ENCODE measurements at regions of chr6 and their contacts with region 1.

Region 1: GRCh38 chr6:149028767-149029405 is 282.1 kb downstream of the UST start:
- DNase-seq: peak; percentile 88
- ATAC-seq: no peak
- H3K4me3 ChIP-seq: no peak overlapping the region
- H3K27ac ChIP-seq: no peak overlapping the region
- H3K4me1 ChIP-seq: peaks cover 38% of the 10 kb centered on the region
- H3K27me3 ChIP-seq: no peaks in the 10 kb centered on the region
- CTCF ChIP-seq: peak; percentile 67

Region 2: GRCh38 chr6:148578245-148578732 is 450.6 kb before region 1 on chr6:
- CTCF ChIA-PET with region 1: interaction called, 5 read pairs
- POLR2A ChIA-PET with region 1: no interaction called
- intact Hi-C with region 1: loop called (anchors 1 kb)
- DNase-seq: peak; percentile 80
- ATAC-seq: peak; percentile 100
- H3K4me3 ChIP-seq: peak overlapping the region; percentile 43; the same call in 1 of the 2 replicates
- H3K27ac ChIP-seq: no peak overlapping the region
- H3K4me1 ChIP-seq: peaks cover 12% of the 10 kb centered on the region; the same call in 1 of the 2 replicates
- H3K27me3 ChIP-seq: no peaks in the 10 kb centered on the region
- CTCF ChIP-seq: peak; percentile 95

Region 3: DNA sequence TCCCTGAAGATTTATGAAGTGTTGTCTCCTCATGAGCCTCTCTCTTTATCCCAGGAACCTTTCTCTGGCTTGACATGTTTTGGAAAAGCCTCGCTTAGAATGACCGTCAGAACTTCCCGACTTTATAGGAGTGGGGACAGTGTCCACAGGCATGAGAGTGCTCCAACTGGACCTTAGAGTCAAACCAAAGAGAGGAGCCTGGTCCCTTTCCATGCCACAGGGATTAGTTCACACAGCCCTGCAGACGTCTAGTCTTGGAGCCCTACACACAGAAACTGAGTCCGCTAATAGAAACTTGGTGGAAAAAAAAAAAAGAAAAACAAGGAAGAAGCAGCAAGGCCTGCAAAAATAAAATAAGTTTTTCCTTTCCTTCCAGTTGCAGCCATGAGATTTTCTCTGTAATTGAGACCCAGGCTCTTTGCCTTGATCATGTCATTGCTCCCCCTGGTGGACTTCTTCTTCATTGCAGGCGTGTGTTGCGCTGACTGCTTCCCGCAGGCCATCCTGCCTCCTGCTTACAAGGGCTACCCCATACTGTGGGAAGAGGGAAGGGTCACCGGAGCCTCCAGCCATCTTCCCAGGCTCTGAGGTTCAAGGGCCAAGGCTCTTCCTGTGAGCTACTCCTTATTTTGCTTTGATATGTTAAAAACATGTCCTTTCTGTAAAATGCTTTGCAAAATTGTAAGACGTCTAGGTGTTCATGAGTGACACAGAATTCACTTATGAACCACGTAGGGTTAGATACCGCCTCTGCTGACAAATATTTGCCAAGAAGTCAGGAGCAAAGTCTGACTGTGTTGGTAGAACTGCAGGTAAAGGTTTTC is 81.1 kb before region 1 on chr6:
- CTCF ChIA-PET with region 1: no interaction called
- POLR2A ChIA-PET with region 1: no interaction called
- intact Hi-C with region 1: loop called (anchors 1 kb)
- DNase-seq: peak; percentile 86
- ATAC-seq: peak; percentile 88
- H3K4me3 ChIP-seq: no peak overlapping the region
- H3K27ac ChIP-seq: no peak overlapping the region
- H3K4me1 ChIP-seq: peaks cover 16% of the 10 kb centered on the region
- H3K27me3 ChIP-seq: no peaks in the 10 kb centered on the region
- CTCF ChIP-seq: peak; percentile 74

Region 4: DNA sequence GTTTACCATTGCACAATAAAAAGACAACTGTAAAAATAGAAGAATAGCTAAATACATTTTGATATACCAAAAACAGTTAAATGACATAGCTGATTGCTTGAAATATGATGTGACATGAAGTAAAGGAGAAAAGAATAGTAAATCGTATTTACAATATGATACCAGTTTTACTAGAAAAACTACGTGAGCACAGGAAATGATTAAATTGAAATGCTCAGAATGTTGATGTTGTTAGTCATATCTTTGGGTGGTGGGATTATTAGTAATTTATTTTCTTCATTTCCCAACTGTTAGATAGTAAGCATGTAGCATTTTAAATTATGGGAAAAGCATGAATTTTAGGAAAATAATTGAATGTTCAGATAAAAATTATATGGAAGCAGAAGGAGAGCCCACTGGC is 20.3 kb after region 1 on chr6:
- CTCF ChIA-PET with region 1: no interaction called
- POLR2A ChIA-PET with region 1: interaction called, 3 read pairs
- intact Hi-C with region 1: loop called (anchors 2 kb)
- DNase-seq: peak; percentile 78
- ATAC-seq: peak; percentile 77
- H3K4me3 ChIP-seq: peak overlapping the region; percentile 35; the same call in 1 of the 2 replicates
- H3K27ac ChIP-seq: peak overlapping the region; percentile 33
- H3K4me1 ChIP-seq: peaks cover 38% of the 10 kb centered on the region
- H3K27me3 ChIP-seq: no peaks in the 10 kb centered on the region
- CTCF ChIP-seq: no peak

Region 5: GRCh38 chr6:149233056-149233715 is 204.3 kb after region 1 on chr6:
- CTCF ChIA-PET with region 1: no interaction called
- POLR2A ChIA-PET with region 1: no interaction called
- intact Hi-C with region 1: loop called (anchors 2 kb)
- DNase-seq: peak; percentile 94
- ATAC-seq: peak; percentile 89
- H3K4me3 ChIP-seq: peak overlapping the region; percentile 55
- H3K27ac ChIP-seq: peak overlapping the region; percentile 100
- H3K4me1 ChIP-seq: peaks cover 47% of the 10 kb centered on the region
- H3K27me3 ChIP-seq: no peaks in the 10 kb centered on the region
- CTCF ChIP-seq: no peak

Region 6: DNA sequence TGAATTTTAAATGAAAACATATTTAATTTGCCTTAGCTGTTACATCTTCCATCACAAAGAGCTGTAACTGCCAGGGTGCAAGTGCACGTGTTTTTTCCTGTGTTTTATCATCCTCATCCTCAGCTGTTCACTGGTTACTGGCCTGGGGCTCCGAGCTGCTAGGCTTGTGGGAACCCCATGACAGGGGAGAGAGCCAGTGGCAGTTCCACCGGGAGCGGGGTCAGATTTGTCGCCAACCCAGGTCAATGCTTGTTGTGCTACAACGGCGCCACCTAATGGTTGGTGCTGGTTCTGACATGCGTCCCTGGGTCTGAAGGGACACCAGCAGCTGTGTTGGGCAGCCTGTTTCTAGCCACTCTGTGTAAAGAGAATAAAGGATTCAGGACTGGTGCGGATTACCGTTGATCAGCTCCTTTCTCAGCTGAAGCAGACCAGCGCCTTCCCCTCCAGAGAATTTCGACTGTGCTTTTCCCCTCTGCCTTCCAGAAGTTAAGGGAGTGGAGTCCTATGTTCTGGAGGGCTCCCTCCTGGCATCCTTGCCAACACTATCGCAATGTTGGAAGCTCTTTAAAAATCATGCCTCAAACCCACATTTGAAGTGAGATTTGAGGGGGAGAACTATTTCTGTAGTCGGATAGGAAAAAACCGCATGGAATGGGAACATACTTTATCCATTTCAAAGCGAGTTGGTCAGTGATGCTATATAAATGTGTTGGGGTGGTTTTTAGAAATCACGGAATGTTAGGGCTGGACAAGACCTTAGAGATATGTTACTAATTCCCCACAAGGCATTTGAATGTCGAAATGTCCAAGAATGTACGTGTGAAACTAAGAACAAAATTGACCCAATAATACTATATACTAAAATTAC is 403.3 kb after region 1 on chr6:
- CTCF ChIA-PET with region 1: interaction called, 7 read pairs
- POLR2A ChIA-PET with region 1: no interaction called
- intact Hi-C with region 1: loop called (anchors 1 kb)
- DNase-seq: peak; percentile 87
- ATAC-seq: peak; percentile 94
- H3K4me3 ChIP-seq: no peak overlapping the region
- H3K27ac ChIP-seq: no peak overlapping the region
- H3K4me1 ChIP-seq: no peaks in the 10 kb centered on the region
- H3K27me3 ChIP-seq: no peaks in the 10 kb centered on the region
- CTCF ChIP-seq: peak; percentile 89

Region 7: GRCh38 chr6:149513915-149514314 is 485.0 kb after region 1 on chr6:
- CTCF ChIA-PET with region 1: interaction called, 3 read pairs
- POLR2A ChIA-PET with region 1: no interaction called
- intact Hi-C with region 1: loop called (anchors 1 kb)
- DNase-seq: no peak
- ATAC-seq: no peak
- H3K4me3 ChIP-seq: no peak overlapping the region
- H3K27ac ChIP-seq: no peak overlapping the region
- H3K4me1 ChIP-seq: no peaks in the 10 kb centered on the region
- H3K27me3 ChIP-seq: no peaks in the 10 kb centered on the region
- CTCF ChIP-seq: no peak

Measured in PC-3 (cell line).